B cell (primary cell): ENCODE measurements at regions of chr1 and their contacts with region 1.

Region 1: DNA sequence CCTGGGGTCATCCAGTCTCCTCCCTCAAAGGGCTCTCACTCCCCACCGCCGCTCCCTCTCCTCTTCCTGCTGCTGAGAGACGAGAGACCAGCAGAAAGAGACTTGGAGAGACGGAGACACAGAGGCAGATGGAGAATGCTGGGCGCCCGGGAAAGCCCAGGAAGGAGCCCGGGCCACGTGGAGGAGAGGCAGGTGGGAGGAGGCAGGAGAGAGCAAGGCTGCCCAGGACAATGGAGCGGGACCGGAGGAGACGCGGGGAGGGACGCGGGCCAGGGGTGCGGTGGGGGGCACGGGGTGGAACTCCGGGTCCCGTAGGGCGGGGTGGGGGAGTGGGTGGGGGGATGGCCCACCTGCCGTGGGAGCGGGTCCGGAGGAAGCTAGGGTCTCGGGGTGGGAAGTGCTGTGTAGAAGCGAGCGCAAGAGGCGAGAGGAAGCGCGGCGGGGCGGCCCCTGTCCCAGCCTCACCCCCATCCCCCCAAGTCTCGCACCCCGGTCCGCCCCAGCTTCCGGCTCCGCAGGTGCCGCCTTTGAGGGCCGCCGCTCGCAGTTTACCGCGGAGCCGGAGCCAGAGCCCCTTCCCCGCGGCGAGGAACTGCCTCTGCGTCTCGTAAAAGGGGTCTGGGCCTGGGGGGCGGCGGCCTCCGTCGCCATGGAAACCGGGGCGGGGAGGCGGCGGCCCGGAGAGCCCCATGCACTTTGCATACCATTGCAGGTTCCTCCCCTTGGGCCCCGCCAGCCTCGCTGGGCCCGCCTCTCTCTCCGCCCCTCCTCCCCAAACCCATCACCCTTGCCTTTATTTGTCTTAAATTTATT is 11.7 kb upstream of the EPHA2 start:
- DNase-seq: peak; percentile 89
- ATAC-seq: peak; percentile 92
- H3K4me3 ChIP-seq: peak overlapping the region in 4 of 5 experiments; percentile 60 to 67 (median 64)
- H3K4me3 Mint-ChIP-seq: peak overlapping the region; percentile 84
- H3K27ac ChIP-seq: peak overlapping the region in 1 of 2 donors; percentile 50
- H3K27ac Mint-ChIP-seq: peak overlapping the region; percentile 50
- H3K4me1 ChIP-seq: peaks cover 21 to 33% of the 10 kb centered on the region in 2 donors
- H3K4me1 Mint-ChIP-seq: peaks cover 27% of the 10 kb centered on the region
- H3K27me3 ChIP-seq: peaks cover 0 to 14% (median 4%) of the 10 kb centered on the region in 4 experiments
- H3K27me3 Mint-ChIP-seq: peaks cover 4% of the 10 kb centered on the region
- CTCF ChIP-seq: no peak

Region 2: GRCh38 chr1:16276302-16277030 is 108.9 kb after region 1 on chr1:
- CTCF ChIA-PET with region 1: no interaction called
- POLR2A ChIA-PET with region 1: interaction called, 11 read pairs
- intact Hi-C with region 1: no loop called
- DNase-seq: no peak
- ATAC-seq: no peak
- H3K4me3 ChIP-seq: no peak overlapping the region
- H3K4me3 Mint-ChIP-seq: no peak overlapping the region
- H3K27ac ChIP-seq: no peak overlapping the region
- H3K27ac Mint-ChIP-seq: no peak overlapping the region
- H3K4me1 ChIP-seq: no peaks in the 10 kb centered on the region
- H3K4me1 Mint-ChIP-seq: peaks cover 2% of the 10 kb centered on the region
- H3K27me3 ChIP-seq: no peaks in the 10 kb centered on the region
- H3K27me3 Mint-ChIP-seq: no peaks in the 10 kb centered on the region
- CTCF ChIP-seq: no peak